Activated naive CD4-positive, alpha-beta T cell treated with anti-CD3 and anti-CD28 coated beads for 36 hours (primary cell): ENCODE measurements at regions of chr6 and their contacts with region 1.

Region 1: DNA sequence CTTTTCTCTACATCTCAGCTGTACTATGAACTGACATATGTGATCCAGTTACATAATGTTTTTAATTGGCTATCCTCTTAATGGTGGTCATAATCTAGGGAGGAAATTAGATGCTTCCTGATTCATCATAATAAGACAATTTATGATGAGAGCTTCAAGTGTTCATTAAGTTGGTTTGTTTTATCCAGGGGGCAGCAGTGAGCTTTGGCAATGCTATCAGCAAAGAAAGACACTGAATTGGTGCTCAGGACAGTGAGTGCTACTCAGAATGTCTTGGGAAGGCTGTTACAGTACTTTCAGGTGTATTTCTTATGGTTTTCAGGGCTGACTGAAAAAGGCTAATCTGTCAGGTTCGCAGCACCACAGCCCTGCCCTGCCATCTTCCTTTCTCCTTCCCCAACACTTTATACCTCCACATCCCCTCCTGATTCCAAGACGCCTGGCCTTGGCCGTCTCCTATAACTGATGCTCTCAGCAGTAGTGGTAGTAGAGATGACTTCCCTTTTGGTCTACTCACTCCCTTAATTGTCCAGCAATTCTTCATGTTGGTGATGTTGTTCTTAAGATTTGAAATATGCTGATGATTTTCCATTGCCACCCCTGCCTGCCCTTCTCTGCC is 67.0 kb upstream of the TNFAIP3 start:
- DNase-seq: peak; percentile 86
- H3K4me3 Mint-ChIP-seq: no peak overlapping the region
- H3K27ac Mint-ChIP-seq: peak overlapping the region; percentile 73
- H3K4me1 Mint-ChIP-seq: peaks cover 60% of the 10 kb centered on the region
- H3K27me3 Mint-ChIP-seq: no peaks in the 10 kb centered on the region

Region 2: GRCh38 chr6:137717074-137718073 is 82.7 kb before region 1 on chr6:
- CTCF ChIA-PET with region 1: interaction called, 19 read pairs
- intact Hi-C with region 1: no loop called
- DNase-seq: peak; percentile 89
- H3K4me3 Mint-ChIP-seq: no peak overlapping the region
- H3K27ac Mint-ChIP-seq: peak overlapping the region; percentile 44
- H3K4me1 Mint-ChIP-seq: peaks cover 36% of the 10 kb centered on the region
- H3K27me3 Mint-ChIP-seq: no peaks in the 10 kb centered on the region

Region 3: GRCh38 chr6:137823826-137824555 is 23.9 kb after region 1 on chr6:
- CTCF ChIA-PET with region 1: interaction called, 46 read pairs
- intact Hi-C with region 1: loop called (anchors 1 kb)
- DNase-seq: peak; percentile 84
- H3K4me3 Mint-ChIP-seq: peak overlapping the region; percentile 67
- H3K27ac Mint-ChIP-seq: peak overlapping the region; percentile 95
- H3K4me1 Mint-ChIP-seq: peaks cover 81% of the 10 kb centered on the region
- H3K27me3 Mint-ChIP-seq: no peaks in the 10 kb centered on the region

Region 4: GRCh38 chr6:137845455-137845854 is 45.4 kb after region 1 on chr6:
- CTCF ChIA-PET with region 1: interaction called, 4 read pairs
- intact Hi-C with region 1: loop called (anchors 1 kb)
- DNase-seq: no peak
- H3K4me3 Mint-ChIP-seq: no peak overlapping the region
- H3K27ac Mint-ChIP-seq: no peak overlapping the region
- H3K4me1 Mint-ChIP-seq: peaks cover 13% of the 10 kb centered on the region
- H3K27me3 Mint-ChIP-seq: no peaks in the 10 kb centered on the region

Region 5: GRCh38 chr6:137873273-137873762 is 73.3 kb after region 1 on chr6:
- CTCF ChIA-PET with region 1: interaction called, 62 read pairs
- intact Hi-C with region 1: no loop called
- DNase-seq: peak; percentile 97
- H3K4me3 Mint-ChIP-seq: peak overlapping the region; percentile 89
- H3K27ac Mint-ChIP-seq: peak overlapping the region; percentile 99
- H3K4me1 Mint-ChIP-seq: peaks cover 37% of the 10 kb centered on the region
- H3K27me3 Mint-ChIP-seq: no peaks in the 10 kb centered on the region

Region 6: GRCh38 chr6:137938770-137939379 is 138.8 kb after region 1 on chr6:
- CTCF ChIA-PET with region 1: interaction called, 21 read pairs
- intact Hi-C with region 1: loop called (anchors 1 kb)
- DNase-seq: no peak
- H3K4me3 Mint-ChIP-seq: no peak overlapping the region
- H3K27ac Mint-ChIP-seq: peak overlapping the region; percentile 80
- H3K4me1 Mint-ChIP-seq: peaks cover 43% of the 10 kb centered on the region
- H3K27me3 Mint-ChIP-seq: no peaks in the 10 kb centered on the region